B cell (primary cell): ENCODE measurements at regions of chr15 and their contacts with region 1.

Region 1: GRCh38 chr15:40906091-40906990 is 12.1 kb downstream of the VPS18 start:
- DNase-seq: peak; percentile 93
- ATAC-seq: peak; percentile 77
- H3K4me3 ChIP-seq: peak overlapping the region; percentile 46 to 95 (median 83)
- H3K4me3 Mint-ChIP-seq: peak overlapping the region; percentile 93
- H3K27ac ChIP-seq: peak overlapping the region; percentile 98 to 99
- H3K27ac Mint-ChIP-seq: peak overlapping the region; percentile 98
- H3K4me1 ChIP-seq: peaks cover 30 to 60% of the 10 kb centered on the region in 2 donors
- H3K4me1 Mint-ChIP-seq: peaks cover 48% of the 10 kb centered on the region
- H3K27me3 ChIP-seq: no peaks in the 10 kb centered on the region
- H3K27me3 Mint-ChIP-seq: no peaks in the 10 kb centered on the region
- CTCF ChIP-seq: peak; percentile 98

Region 2: DNA sequence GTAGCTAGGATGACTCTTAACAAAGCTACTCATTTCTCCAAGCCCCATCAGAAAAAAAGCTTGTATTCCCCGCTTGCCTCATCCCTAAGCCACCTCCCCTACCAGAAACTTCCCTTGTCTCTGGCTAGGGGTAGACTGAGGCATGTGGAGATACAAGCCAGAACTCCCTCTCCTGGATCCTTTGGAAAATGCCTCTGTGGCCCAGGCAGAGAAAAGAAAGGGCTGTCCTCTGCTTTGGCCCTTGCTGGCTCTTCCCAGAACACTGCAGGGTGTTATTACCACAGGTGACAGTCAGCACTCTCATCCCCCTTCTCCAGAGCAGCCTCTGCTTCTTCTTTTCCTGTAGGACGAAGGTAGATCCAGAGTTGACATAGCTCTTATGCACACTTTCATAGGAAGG is 166.5 kb before region 1 on chr15:
- CTCF ChIA-PET with region 1: no interaction called
- POLR2A ChIA-PET with region 1: no interaction called
- intact Hi-C with region 1: no loop called
- DNase-seq: no peak
- ATAC-seq: no peak
- H3K4me3 ChIP-seq: no peak overlapping the region
- H3K4me3 Mint-ChIP-seq: no peak overlapping the region
- H3K27ac ChIP-seq: no peak overlapping the region
- H3K27ac Mint-ChIP-seq: no peak overlapping the region
- H3K4me1 ChIP-seq: no peaks in the 10 kb centered on the region
- H3K4me1 Mint-ChIP-seq: no peaks in the 10 kb centered on the region
- H3K27me3 ChIP-seq: no peaks in the 10 kb centered on the region
- H3K27me3 Mint-ChIP-seq: no peaks in the 10 kb centered on the region
- CTCF ChIP-seq: no peak

Region 3: DNA sequence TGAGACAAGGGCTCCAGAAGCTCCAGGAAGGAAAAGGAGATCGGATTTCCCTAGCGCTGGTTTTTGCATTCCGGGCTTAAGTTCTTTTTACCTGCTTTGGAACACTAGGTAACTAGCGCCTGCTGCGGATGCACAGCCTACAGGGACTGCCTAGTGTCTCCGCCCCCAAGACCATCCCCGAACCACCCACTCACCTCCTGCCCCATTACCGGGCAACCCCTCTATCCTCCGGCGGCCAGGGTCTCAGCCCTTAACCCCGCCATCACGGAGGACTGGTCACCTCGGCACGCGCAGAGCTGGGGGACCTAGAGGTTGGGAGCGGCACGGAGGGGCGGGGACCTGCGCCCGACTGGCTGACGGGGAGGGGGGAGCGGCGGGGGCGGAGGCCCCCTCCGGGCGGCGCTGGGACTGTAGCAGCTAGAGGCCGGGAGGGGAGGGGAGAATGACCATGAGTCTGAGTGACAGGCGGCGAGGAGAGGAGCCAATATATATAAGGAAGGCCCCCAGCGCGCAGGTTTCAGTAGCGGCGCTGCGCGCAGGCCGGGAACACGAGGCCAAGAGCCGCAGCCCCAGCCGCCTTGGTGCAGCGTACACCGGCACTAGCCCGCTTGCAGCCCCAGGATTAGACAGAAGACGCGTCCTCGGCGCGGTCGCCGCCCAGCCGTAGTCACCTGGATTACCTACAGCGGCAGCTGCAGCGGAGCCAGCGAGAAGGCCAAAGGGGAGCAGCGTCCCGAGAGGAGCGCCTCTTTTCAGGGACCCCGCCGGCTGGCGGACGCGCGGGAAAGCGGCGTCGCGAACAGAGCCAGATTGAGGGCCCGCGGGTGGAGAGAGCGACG is 22.7 kb after region 1 on chr15 and contains the start of gene DLL4:
- CTCF ChIA-PET with region 1: interaction called, 84 read pairs
- POLR2A ChIA-PET with region 1: interaction called, 29 read pairs
- intact Hi-C with region 1: loop called (anchors 1 kb)
- DNase-seq: peak; percentile 66
- ATAC-seq: peak; percentile 35
- H3K4me3 ChIP-seq: peak within 1 kb of the TSS in 4 of 5 experiments; percentile 31 to 60 (median 48)
- H3K4me3 Mint-ChIP-seq: peak within 1 kb of the TSS; percentile 84
- H3K27ac ChIP-seq: no peak within 1 kb of the TSS
- H3K27ac Mint-ChIP-seq: peak within 1 kb of the TSS; percentile 53
- H3K4me1 ChIP-seq: peaks cover 57 to 65% of the 10 kb centered on the region in 2 donors
- H3K4me1 Mint-ChIP-seq: peaks cover 47% of the 10 kb centered on the region
- H3K27me3 ChIP-seq: peaks cover 0 to 88% (median 53%) of the 10 kb centered on the region in 4 experiments
- H3K27me3 Mint-ChIP-seq: peaks cover 68% of the 10 kb centered on the region
- CTCF ChIP-seq: no peak
- total RNA-seq, gene DLL4: 0.30 and 0.36 TPM in 2 replicates

Region 4: GRCh38 chr15:40982855-40983254 is 76.5 kb after region 1 on chr15:
- CTCF ChIA-PET with region 1: interaction called, 8 read pairs
- POLR2A ChIA-PET with region 1: interaction called, 11 read pairs
- intact Hi-C with region 1: no loop called
- DNase-seq: no peak
- ATAC-seq: no peak
- H3K4me3 ChIP-seq: no peak overlapping the region
- H3K4me3 Mint-ChIP-seq: no peak overlapping the region
- H3K27ac ChIP-seq: no peak overlapping the region
- H3K27ac Mint-ChIP-seq: no peak overlapping the region
- H3K4me1 ChIP-seq: no peaks in the 10 kb centered on the region
- H3K4me1 Mint-ChIP-seq: no peaks in the 10 kb centered on the region
- H3K27me3 ChIP-seq: no peaks in the 10 kb centered on the region
- H3K27me3 Mint-ChIP-seq: no peaks in the 10 kb centered on the region
- CTCF ChIP-seq: no peak

Region 5: GRCh38 chr15:41180206-41180789 is 274.0 kb after region 1 on chr15:
- CTCF ChIA-PET with region 1: interaction called, 15 read pairs
- POLR2A ChIA-PET with region 1: interaction called, 7 read pairs
- intact Hi-C with region 1: loop called (anchors 1 kb)
- DNase-seq: no peak
- ATAC-seq: no peak
- H3K4me3 ChIP-seq: no peak overlapping the region
- H3K4me3 Mint-ChIP-seq: no peak overlapping the region
- H3K27ac ChIP-seq: no peak overlapping the region
- H3K27ac Mint-ChIP-seq: no peak overlapping the region
- H3K4me1 ChIP-seq: no peaks in the 10 kb centered on the region
- H3K4me1 Mint-ChIP-seq: peaks cover 3% of the 10 kb centered on the region
- H3K27me3 ChIP-seq: no peaks in the 10 kb centered on the region
- H3K27me3 Mint-ChIP-seq: peaks cover 3% of the 10 kb centered on the region
- CTCF ChIP-seq: no peak

Region 6: GRCh38 chr15:41331833-41332787 is 425.8 kb after region 1 on chr15 and contains the start of gene OIP5:
- CTCF ChIA-PET with region 1: interaction called, 11 read pairs
- POLR2A ChIA-PET with region 1: no interaction called
- intact Hi-C with region 1: loop called (anchors 2 kb)
- DNase-seq: peak; percentile 98
- ATAC-seq: peak; percentile 94
- H3K4me3 ChIP-seq: peak within 1 kb of the TSS; percentile 84 to 98 (median 89)
- H3K4me3 Mint-ChIP-seq: peak within 1 kb of the TSS; percentile 99
- H3K27ac ChIP-seq: peak within 1 kb of the TSS; percentile 45 to 76
- H3K27ac Mint-ChIP-seq: peak within 1 kb of the TSS; percentile 95
- H3K4me1 ChIP-seq: peaks cover 13 to 19% of the 10 kb centered on the region in 2 donors
- H3K4me1 Mint-ChIP-seq: peaks cover 27% of the 10 kb centered on the region
- H3K27me3 ChIP-seq: no peaks in the 10 kb centered on the region
- H3K27me3 Mint-ChIP-seq: no peaks in the 10 kb centered on the region
- CTCF ChIP-seq: peak; percentile 57
- total RNA-seq, gene OIP5: 0.84 and 2.3 TPM in 2 replicates

Region 7: DNA sequence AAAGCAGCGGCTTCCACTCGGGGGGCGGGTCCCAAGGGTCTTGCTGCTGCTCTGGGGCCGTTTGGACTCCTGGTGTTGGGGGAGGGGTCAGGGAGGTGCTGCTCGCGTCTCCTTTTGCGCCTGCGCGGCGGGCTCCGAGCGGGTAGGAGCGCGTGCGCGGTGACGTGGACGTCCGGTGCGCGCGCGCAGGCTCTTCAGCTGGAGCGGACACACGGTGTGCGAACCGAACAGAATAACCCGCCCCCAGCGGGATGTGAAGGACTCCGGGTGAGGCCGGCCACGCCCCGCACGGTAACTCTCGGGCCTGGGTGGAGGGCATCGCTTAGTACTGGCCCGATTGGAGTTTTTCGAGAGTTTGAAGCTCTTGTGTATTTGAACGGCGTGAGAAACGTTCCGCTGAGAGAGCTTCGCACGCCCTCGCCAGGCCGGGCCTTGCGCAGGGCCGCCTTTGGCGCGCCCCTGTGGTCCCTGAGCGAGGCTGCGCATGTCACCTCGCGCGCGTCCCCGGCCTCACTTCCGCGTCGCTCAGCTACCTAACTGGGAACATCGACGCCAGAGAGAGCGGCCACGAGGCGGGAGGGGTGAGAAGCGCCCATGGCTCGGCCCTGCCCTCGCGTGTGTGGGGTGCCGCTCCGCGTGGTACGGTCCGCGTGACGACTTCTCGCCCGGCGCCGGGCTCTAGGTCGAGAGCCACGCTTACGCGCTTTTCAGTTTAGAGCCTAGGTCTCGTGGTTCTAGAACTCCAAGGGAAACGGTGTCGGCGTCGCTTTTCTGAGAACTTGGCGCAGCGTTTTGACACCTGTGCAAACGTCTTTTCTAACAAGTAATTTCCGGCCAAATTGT is 754.1 kb after region 1 on chr15 and contains the start of gene MGA:
- CTCF ChIA-PET with region 1: no interaction called
- POLR2A ChIA-PET with region 1: no interaction called
- intact Hi-C with region 1: loop called (anchors 10 kb)
- DNase-seq: peak; percentile 98
- ATAC-seq: peak; percentile 80
- H3K4me3 ChIP-seq: peak within 1 kb of the TSS; percentile 58 to 72 (median 63)
- H3K4me3 Mint-ChIP-seq: peak within 1 kb of the TSS; percentile 89
- H3K27ac ChIP-seq: peak within 1 kb of the TSS; percentile 94 to 95
- H3K27ac Mint-ChIP-seq: peak within 1 kb of the TSS; percentile 96
- H3K4me1 ChIP-seq: peaks cover 26 to 28% of the 10 kb centered on the region in 2 donors
- H3K4me1 Mint-ChIP-seq: peaks cover 44% of the 10 kb centered on the region
- H3K27me3 ChIP-seq: no peaks in the 10 kb centered on the region
- H3K27me3 Mint-ChIP-seq: no peaks in the 10 kb centered on the region
- CTCF ChIP-seq: no peak
- total RNA-seq, gene MGA: 77.2 and 79.7 TPM in 2 replicates